Activated CD8-positive, alpha-beta memory T cell treated with anti-CD3 and anti-CD28 coated beads, Interleukin-2, amount 10 ng/mL, durations not matched to agents 7 days and 5 days (primary cell): ENCODE measurements at regions of chr18 and their contacts with region 1.

Region 1: DNA sequence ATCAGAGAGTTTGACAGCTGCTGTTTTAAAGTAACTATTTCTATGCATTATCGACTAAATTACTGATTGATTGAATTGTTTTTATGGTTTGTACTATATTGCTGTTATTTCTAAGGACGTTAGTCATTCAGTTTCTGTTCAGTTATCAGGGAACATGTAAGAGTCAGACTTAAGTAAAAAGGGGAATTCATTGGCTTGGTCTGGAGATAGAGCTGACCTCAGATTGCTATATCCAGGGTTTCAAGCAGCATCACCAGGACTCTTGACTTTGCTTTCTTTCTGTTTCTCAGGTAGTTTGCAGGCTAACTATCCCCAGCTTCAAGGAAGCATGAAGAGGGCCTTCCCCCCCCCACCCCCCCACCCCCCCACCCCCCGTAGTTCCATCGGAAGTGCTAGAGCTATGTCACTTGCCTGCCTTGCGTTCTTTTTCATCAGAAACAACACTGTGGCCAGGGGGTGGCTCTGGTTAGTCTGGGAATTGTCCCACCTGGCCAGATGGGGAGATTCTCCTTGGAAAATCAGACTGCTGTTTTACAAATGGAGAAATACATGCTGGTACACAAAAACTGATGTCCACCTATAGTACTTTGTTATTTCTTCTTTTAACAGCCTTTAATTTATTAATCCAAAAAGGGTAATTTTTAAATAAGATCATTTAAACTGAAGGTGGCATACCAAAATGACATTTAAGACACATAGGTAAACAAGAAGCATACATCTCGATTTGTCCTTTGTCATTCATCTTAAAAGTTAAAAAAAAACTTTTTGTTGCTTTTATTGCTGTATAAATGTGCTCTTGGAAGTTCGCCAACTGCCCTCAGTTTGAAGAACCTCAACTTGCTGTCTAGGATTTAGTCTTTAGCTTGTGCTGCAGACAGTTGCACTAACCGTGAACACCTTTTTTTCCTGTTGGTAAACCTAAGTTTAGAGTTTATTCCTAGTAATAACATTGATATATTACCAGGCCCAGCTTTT is 9.4 kb downstream of the SMAD4 start:
- DNase-seq: no peak
- ATAC-seq: no peak
- H3K4me3 Mint-ChIP-seq: no peak overlapping the region
- H3K27ac Mint-ChIP-seq: no peak overlapping the region
- H3K4me1 Mint-ChIP-seq: peaks cover 48% of the 10 kb centered on the region
- H3K27me3 Mint-ChIP-seq: no peaks in the 10 kb centered on the region

Region 2: GRCh38 chr18:51051105-51051712 is 11.8 kb after region 1 on chr18:
- CTCF ChIA-PET with region 1: interaction called, 13 read pairs
- DNase-seq: no peak
- ATAC-seq: peak; percentile 84
- H3K4me3 Mint-ChIP-seq: no peak overlapping the region
- H3K27ac Mint-ChIP-seq: peak overlapping the region; percentile 50
- H3K4me1 Mint-ChIP-seq: peaks cover 24% of the 10 kb centered on the region
- H3K27me3 Mint-ChIP-seq: no peaks in the 10 kb centered on the region